ENCODE measurements at regions of chr16 and their contacts with region 1.

Region 1: GRCh38 chr16:14529010-14529669 is 100.9 kb downstream of the PARN start:
- DNase-seq: peak; percentile 74
- ATAC-seq: peak; percentile 58
- H3K4me3 Mint-ChIP-seq: no peak overlapping the region
- H3K27ac Mint-ChIP-seq: no peak overlapping the region
- H3K4me1 Mint-ChIP-seq: no peaks in the 10 kb centered on the region
- H3K27me3 Mint-ChIP-seq: no peaks in the 10 kb centered on the region

Region 2: DNA sequence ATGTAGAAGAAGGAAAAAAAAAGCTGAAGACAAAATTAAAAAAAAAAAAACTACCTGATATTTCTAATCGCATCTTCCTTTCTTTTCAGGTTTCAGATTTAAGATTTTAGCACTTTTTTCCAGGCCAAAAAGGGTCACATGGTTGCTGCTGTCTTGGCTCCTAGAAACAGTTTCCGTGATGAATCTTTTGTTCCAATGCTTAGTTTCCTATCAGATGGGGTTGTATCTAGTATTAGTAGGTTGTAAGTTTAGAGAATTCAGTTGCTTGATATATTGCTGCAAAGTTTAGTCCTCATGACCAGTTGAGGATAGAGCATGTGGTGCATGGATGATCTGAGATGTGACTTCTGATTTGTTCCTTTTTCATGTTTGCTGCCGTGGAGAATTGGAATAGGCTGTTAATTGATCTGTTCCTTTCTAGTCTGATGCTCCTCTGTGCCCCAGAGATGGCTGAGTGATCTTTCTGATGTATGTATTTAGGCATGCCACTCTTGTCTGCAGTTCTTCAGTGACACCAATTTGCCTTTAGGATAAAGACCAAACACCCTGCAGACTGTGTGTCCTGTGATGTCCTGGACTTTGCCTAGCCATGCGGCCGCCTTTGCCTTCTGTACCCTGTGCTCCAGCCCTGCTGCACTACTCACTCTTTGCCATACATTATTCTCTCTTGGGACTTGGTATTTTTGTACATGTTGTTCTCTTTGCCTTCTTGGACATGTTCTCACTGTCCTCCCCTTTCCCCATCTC is 364.1 kb before region 1 on chr16:
- CTCF ChIA-PET with region 1: no interaction called
- POLR2A ChIA-PET with region 1: no interaction called
- intact Hi-C with region 1: no loop called
- DNase-seq: no peak
- ATAC-seq: no peak
- H3K4me3 Mint-ChIP-seq: no peak overlapping the region
- H3K27ac Mint-ChIP-seq: no peak overlapping the region
- H3K4me1 Mint-ChIP-seq: peaks cover 28% of the 10 kb centered on the region
- H3K27me3 Mint-ChIP-seq: no peaks in the 10 kb centered on the region

Region 3: GRCh38 chr16:14300705-14301168 is 228.4 kb before region 1 on chr16:
- CTCF ChIA-PET with region 1: interaction called, 4 read pairs
- POLR2A ChIA-PET with region 1: no interaction called
- intact Hi-C with region 1: loop called (anchors 1 to 2 kb)
- DNase-seq: peak; percentile 68
- ATAC-seq: peak; percentile 78
- H3K4me3 Mint-ChIP-seq: peak overlapping the region; percentile 63
- H3K27ac Mint-ChIP-seq: no peak overlapping the region
- H3K4me1 Mint-ChIP-seq: peaks cover 8% of the 10 kb centered on the region
- H3K27me3 Mint-ChIP-seq: peaks cover 15% of the 10 kb centered on the region

Region 4: DNA sequence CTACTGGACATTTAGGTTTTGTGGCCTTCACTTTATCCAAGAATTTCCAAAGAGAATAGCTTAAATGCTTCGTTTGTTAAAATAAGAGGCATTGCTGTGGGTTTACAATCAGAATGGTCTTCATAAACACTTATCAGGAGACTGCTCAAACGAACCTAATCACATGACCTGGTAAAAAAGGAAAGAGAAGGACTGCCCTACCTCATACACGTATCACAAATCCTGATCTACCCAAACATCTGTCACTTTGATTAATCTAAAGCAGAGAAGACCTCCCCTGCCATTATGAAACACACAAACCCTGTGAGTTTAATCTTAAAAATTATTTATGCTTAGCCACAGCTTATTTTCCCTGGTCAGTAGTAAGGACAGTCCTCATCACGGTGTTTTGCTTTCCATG is 24.3 kb after region 1 on chr16:
- CTCF ChIA-PET with region 1: no interaction called
- POLR2A ChIA-PET with region 1: no interaction called
- intact Hi-C with region 1: no loop called
- DNase-seq: no peak
- ATAC-seq: no peak
- H3K4me3 Mint-ChIP-seq: no peak overlapping the region
- H3K27ac Mint-ChIP-seq: no peak overlapping the region
- H3K4me1 Mint-ChIP-seq: no peaks in the 10 kb centered on the region
- H3K27me3 Mint-ChIP-seq: no peaks in the 10 kb centered on the region

Measured in activated CD4-positive, alpha-beta T cell treated with anti-CD3 and anti-CD28 coated beads for 36 hours (primary cell).